Naive thymus-derived CD8-positive, alpha-beta T cell (primary cell): ENCODE measurements at regions of chr22 and their contacts with region 1.

Region 1: DNA sequence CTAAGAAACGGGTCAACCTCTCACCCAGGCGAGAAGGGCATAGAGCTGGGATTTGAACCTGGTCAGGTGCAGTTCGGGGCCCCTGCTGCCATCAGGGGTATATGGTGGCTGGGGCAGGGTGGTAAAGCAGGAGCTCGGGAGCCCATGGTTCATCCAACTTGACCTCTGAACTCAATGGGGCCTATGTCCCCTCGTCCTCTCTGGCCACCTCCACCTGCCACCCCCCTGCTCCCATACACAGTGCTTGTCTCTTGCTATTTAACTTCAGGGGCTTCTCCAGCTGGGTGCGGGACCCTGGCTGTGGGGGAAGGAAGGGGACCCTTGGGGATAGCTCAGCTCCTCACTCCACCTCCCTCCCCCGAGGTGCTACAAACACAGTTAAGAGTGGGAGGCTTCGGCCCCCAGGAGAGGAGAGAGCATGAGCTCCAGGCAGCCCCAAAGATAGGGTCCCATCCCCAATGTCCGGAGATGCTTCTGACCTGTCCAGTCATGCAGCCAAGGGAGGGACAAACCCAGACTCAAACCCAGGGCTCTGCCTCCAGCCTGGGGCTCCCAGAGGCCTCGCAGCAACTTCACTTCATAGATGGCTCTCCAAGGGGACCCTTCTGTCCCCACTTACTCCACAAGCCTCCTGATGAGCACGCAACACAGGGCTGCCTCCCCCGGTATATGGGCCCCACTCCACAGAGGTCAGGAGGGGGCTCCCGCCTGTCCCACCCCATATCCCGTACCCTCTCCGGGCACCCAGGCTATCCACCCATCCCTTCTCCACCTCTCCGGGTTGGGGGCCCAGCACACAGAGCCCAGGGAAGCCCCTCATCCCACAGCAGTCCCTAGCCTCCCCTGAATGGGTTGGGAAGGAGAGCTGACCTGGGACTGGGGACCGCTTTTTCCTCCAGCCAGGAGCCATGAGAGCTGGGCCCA is 712 bp downstream of the IL2RB start:
- DNase-seq: peak in 1 of 10 donors; percentile 51
- ATAC-seq: peak in 1 of 2 donors; percentile 17
- H3K4me3 Mint-ChIP-seq: peak overlapping the region; percentile 89 to 94 (median 90)
- H3K27ac Mint-ChIP-seq: peak overlapping the region; percentile 96 to 99 (median 98)
- H3K4me1 Mint-ChIP-seq: peaks cover 40 to 78% (median 65%) of the 10 kb centered on the region in 4 donors
- H3K27me3 Mint-ChIP-seq: no peaks in the 10 kb centered on the region

Region 2: DNA sequence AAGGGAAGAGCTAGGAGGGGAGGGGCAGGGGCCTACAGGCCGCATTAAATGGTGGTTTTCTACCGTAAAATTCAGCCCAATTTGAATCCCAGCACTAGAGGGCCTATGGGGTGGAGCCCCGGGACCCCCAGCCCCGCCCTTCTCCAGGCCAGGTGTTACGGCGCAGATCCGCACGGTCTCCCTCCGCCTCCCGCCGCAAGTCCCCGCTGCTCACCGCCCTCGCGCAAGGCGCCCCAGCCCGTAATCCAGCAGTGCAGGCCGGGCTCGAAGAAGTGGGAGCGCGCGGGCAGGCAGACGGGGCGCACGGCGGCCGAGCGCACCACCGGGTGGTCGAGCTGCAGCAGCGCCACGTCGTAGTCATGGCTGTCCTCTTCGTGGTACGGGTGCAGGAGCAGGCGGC is 80.1 kb before region 1 on chr22:
- POLR2A ChIA-PET with region 1: no interaction called
- DNase-seq: no peak
- ATAC-seq: peak; percentile 45 to 50
- H3K4me3 Mint-ChIP-seq: peak overlapping the region in 1 of 10 donors; percentile 29
- H3K27ac Mint-ChIP-seq: no peak overlapping the region
- H3K4me1 Mint-ChIP-seq: peaks cover 5 to 17% (median 14%) of the 10 kb centered on the region in 4 donors
- H3K27me3 Mint-ChIP-seq: peaks cover 2 to 19% (median 10%) of the 10 kb centered on the region in 5 donors

Region 3: DNA sequence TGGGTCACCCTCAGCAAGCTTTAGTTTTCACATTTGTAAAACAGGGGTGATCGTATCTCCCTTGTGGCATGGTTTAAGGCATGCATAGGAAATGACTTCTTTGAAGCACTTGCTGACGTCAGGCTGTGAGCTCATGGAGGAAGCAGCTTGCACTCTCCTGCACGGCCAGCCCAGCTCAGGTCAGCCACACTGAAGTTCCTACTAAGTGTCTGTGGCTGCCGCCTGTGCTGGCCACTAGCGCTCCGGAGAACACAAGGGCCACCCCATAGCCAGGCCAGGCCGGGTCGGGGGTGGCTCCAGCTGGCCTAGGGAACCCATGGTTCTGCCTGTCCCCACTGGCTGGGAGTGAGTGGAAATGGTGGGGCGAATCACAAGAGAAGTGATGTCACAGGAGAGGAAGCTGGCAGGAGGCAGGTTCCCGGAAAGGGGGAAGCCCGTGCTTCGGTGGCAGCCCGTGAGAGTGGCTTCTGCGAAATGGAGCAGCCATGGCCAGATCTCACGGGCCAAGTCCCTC is 69.3 kb before region 1 on chr22:
- POLR2A ChIA-PET with region 1: interaction called, 10 read pairs
- DNase-seq: peak; percentile 45 to 92 (median 86)
- ATAC-seq: peak; percentile 78 to 89
- H3K4me3 Mint-ChIP-seq: peak overlapping the region; percentile 41 to 79 (median 72)
- H3K27ac Mint-ChIP-seq: peak overlapping the region; percentile 95 to 100 (median 99)
- H3K4me1 Mint-ChIP-seq: peaks cover 30 to 39% (median 32%) of the 10 kb centered on the region in 4 donors
- H3K27me3 Mint-ChIP-seq: peaks cover 0 to 8% (median 0%) of the 10 kb centered on the region in 5 donors

Region 4: DNA sequence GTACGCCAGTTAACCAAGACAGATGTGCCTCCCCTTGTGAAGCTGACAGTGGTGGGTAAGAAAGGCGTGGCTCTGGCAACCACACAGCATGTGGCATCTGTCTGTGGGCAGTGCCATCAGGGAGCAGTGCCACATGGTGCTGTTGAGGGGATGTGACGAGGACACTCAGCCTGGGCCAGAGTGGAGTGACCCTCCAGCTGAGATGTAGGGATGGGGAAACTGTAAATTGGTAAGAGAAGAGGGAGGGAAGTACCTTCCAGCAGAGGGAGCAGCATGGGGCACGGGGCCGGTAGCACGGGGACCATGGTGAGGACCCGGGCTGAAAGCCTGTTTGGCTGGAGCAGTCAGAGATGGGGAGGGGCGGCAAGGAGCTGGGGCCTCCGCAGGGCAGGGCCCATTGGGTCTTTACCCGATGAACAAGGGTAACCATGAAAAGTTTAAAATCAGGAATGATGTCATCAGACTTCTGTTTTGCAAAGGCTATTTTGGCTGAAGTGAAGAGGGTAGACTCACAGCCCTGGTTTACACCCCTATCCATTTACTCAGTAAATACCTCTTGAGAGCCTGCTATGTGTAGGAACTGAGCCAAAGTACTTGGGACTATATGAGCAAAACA is 49.9 kb before region 1 on chr22:
- POLR2A ChIA-PET with region 1: no interaction called
- DNase-seq: peak in 3 of 10 donors; percentile 10 to 17 (median 14)
- ATAC-seq: peak; percentile 56 to 57
- H3K4me3 Mint-ChIP-seq: peak overlapping the region in 1 of 10 donors; percentile 27
- H3K27ac Mint-ChIP-seq: peak overlapping the region in 5 of 10 donors; percentile 4 to 84 (median 74)
- H3K4me1 Mint-ChIP-seq: peaks cover 3 to 33% (median 11%) of the 10 kb centered on the region in 4 donors
- H3K27me3 Mint-ChIP-seq: peaks cover 7 to 30% (median 13%) of the 10 kb centered on the region in 5 donors

Region 5: GRCh38 chr22:37218771-37219411 is 69.9 kb after region 1 on chr22:
- POLR2A ChIA-PET with region 1: interaction called, 15 read pairs
- DNase-seq: peak in 9 of 10 donors; percentile 59 to 95 (median 83)
- ATAC-seq: peak; percentile 85 to 88
- H3K4me3 Mint-ChIP-seq: peak overlapping the region; percentile 67 to 91 (median 80)
- H3K27ac Mint-ChIP-seq: peak overlapping the region; percentile 86 to 99 (median 97)
- H3K4me1 Mint-ChIP-seq: peaks cover 48 to 96% (median 93%) of the 10 kb centered on the region in 4 donors
- H3K27me3 Mint-ChIP-seq: no peaks in the 10 kb centered on the region